HCT116 (cell line): ENCODE measurements at regions of chr5 and their contacts with region 1.

Region 1: GRCh38 chr5:148970228-148970627 is 92.6 kb downstream of the SH3TC2 start:
- DNase-seq: no peak
- ATAC-seq: no peak
- H3K4me3 ChIP-seq: no peak overlapping the region
- H3K27ac ChIP-seq: no peak overlapping the region
- H3K4me1 ChIP-seq: peaks cover 20 to 70% of the 10 kb centered on the region in 2 experiments
- H3K27me3 ChIP-seq: no peaks in the 10 kb centered on the region
- CTCF ChIP-seq: no peak
- POLR2A ChIP-seq: no peak
- RAD21 ChIP-seq: no peak

Region 2: GRCh38 chr5:148957591-148958202 is 12.5 kb before region 1 on chr5:
- CTCF ChIA-PET with region 1: interaction called, 28 read pairs
- POLR2A ChIA-PET with region 1: interaction called, 4 read pairs
- RAD21 ChIA-PET with region 1: interaction called in 1 of 2 experiments, 4 read pairs
- intact Hi-C with region 1: no loop called
- DNase-seq: no peak
- ATAC-seq: peak; percentile 76
- H3K4me3 ChIP-seq: no peak overlapping the region
- H3K27ac ChIP-seq: no peak overlapping the region
- H3K4me1 ChIP-seq: peaks cover 0 to 7% of the 10 kb centered on the region in 2 experiments; a peak in 1 of 4 replicates
- H3K27me3 ChIP-seq: no peaks in the 10 kb centered on the region
- CTCF ChIP-seq: peak; percentile 84 to 97 (median 90)
- POLR2A ChIP-seq: no peak
- RAD21 ChIP-seq: peak; percentile 83